Ascending aorta (tissue), 2 donors: ENCODE measurements at regions of chr3 and their contacts with region 1.

Region 1: DNA sequence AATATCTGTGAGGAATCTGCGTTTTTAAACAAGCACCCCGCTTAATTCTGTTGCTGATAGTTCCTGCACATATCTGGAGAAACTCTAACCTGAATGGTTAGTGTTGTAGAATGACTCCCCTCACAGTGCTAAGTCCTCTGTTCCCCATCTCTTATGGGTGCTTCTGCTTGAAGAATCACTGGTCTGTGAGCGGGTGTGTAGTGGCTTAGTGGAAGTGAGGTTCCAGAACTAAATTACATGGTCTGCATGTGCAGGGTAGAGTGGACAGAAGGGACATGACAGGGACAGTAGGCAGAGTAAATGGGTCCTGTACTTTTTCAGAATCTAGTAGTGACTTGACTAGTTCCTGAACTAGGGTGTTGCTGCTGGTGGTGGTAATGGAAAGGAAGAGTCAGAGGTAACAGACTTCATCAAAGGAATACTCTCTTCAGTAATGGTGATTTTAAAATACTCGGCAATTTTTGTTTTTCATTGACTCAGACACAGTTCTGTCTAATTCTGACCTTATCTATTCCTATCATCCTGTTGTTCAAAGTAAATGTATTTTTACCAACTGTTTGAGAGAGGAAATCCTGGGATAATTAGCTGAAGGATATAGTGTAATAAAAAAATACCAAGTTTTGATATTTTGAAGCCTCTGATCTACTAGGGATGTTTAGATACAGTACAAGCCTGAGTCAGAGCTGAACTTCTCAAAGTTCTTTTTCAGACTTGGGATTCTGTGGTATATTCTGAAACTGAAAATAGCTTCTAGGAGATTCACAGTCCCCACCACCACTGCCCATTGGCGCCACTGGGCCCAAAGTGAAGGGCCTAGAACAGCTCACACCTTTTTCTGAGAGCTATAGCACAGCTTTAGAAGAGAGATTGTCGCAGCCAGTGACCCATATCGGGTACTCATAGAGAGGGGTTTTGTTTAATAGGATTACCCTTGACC is 55.5 kb downstream of the FNDC3B start:
- DNase-seq: no peak
- H3K4me3 ChIP-seq: no peak overlapping the region
- H3K27ac ChIP-seq: peak overlapping the region; percentile 44 to 58
- H3K4me1 ChIP-seq: peaks cover 9 to 34% of the 10 kb centered on the region in 2 donors
- H3K27me3 ChIP-seq: no peaks in the 10 kb centered on the region
- CTCF ChIP-seq: no peak

Region 2: DNA sequence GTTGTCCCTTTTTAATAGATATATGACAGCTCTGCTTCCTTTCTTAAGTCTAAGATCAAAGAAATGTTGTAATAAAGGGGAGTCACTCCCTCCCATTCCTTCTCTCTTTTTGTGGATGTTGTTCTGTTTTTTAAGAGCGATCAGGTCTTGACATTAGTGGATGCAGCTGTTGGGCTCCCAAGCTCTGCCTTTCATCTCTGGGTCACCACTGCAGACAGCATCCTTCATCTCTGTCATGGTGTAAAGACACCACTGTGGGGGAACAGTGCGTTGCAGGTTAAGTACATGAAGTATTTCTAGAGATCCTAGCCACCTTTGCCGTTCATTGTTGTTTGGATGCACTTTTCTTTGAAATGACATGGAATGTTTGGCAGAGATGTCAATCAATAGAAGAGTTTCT is 37.8 kb before region 1 on chr3:
- intact Hi-C with region 1: loop called (anchors 5 kb)
- DNase-seq: no peak
- H3K4me3 ChIP-seq: no peak overlapping the region
- H3K27ac ChIP-seq: peak overlapping the region; percentile 43 to 71
- H3K4me1 ChIP-seq: peaks cover 4 to 54% of the 10 kb centered on the region in 2 donors
- H3K27me3 ChIP-seq: no peaks in the 10 kb centered on the region
- CTCF ChIP-seq: no peak

Region 3: GRCh38 chr3:172115787-172116186 is 20.9 kb after region 1 on chr3:
- intact Hi-C with region 1: no loop called
- DNase-seq: no peak
- H3K4me3 ChIP-seq: no peak overlapping the region
- H3K27ac ChIP-seq: no peak overlapping the region
- H3K4me1 ChIP-seq: peaks cover 0 to 5% of the 10 kb centered on the region in 2 donors
- H3K27me3 ChIP-seq: no peaks in the 10 kb centered on the region
- CTCF ChIP-seq: no peak

Region 4: GRCh38 chr3:172616031-172616461 is 521.2 kb after region 1 on chr3:
- intact Hi-C with region 1: no loop called
- DNase-seq: no peak
- H3K4me3 ChIP-seq: no peak overlapping the region
- H3K27ac ChIP-seq: no peak overlapping the region
- H3K4me1 ChIP-seq: no peaks in the 10 kb centered on the region
- H3K27me3 ChIP-seq: no peaks in the 10 kb centered on the region
- CTCF ChIP-seq: no peak

Region 5: DNA sequence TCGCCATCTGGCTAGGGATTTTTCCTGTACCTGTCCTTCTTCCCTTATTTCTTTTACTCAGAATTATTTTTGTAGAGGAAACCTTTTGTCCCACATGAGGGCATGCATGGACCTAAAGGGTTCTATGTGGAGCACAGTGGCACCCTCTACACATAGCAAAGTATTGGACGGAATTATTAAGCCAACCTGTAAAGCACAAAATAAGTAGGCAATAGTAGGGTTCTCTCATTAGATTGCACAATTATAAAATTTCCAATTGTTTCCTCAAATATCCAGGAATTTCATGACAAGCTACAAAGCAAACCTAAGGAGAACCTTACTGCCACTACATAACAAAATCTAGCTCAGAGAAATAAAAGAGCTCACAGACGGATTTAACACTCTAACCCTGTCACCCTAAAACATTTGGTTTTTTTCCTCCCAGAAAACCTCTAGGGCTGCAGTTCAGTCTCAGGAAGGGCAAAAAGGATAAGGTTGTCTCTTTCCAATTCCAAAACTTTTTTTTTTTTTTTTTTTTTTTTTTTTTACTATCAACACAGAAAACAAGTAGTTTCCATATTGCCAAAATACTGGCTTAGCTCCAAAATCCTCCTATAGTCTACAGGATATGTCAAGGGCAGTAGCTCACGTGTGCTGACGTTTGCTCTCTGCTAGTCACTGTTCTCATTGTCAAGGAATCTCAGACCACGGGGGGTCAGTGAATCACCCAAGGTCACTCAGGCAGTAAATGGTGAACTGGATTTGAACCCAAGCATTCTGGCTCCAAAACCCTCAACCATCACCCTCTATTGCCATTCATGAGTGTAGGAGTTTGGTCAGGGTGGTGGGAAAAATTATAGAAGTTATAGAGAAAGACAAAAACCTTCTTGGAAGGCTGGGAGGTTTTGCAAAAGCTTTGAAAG is 563.7 kb after region 1 on chr3:
- intact Hi-C with region 1: no loop called
- DNase-seq: no peak
- H3K4me3 ChIP-seq: no peak overlapping the region
- H3K27ac ChIP-seq: no peak overlapping the region
- H3K4me1 ChIP-seq: no peaks in the 10 kb centered on the region
- H3K27me3 ChIP-seq: no peaks in the 10 kb centered on the region
- CTCF ChIP-seq: no peak